HEK293 (cell line): ENCODE measurements at regions of chr1 and their contacts with region 1.

Region 1: DNA sequence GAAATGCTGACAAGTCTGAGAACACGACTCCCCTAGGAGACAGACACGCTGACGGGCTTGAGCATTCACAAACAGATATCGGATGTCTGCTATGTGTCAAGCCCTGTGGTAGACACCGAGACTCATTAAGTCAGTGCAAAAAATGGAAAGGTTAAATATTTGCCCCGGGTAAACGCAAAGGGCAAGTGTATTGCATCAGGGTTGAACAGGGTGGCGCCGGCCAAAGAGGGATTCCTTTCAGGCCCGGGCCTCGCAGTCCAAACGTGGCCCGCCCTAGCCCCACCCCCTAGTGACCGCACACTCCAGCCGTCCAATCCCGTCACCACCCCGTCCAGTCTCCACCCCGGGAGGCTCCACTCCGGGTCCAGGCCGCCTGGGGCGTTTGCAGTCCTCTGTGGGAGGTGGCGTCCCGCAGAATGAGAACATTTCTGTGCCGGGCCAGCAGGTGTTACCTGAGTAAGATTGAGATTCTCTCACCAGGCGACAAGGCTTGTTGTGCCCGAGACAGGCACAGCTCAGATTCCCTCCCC is 16.3 kb upstream of the TMEM9 start:
- H3K4me3 ChIP-seq: peak overlapping the region; percentile 54
- H3K27ac ChIP-seq: peak overlapping the region; percentile 82
- H3K4me1 ChIP-seq: no peaks in the 10 kb centered on the region
- CTCF ChIP-seq: no peak

Region 2: DNA sequence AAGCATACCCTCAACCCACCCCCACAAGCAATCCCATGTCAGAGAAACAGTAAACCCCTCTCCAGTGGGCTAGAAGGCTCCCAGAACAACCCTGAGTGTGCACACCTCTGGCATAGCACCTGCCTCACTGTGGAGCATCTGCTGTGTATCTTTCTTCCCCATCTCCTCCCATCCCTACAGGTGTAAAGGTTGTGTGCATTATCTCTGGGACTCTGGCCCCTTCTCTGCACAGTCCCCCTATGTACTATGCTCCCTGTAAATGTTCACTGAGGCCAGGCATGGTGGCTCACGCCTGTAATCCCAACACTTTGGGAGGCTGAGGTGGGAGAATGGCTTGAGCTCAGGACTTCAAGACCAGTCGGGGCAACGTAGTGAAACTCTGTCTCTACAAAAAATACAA is 57.7 kb before region 1 on chr1:
- CTCF ChIA-PET with region 1: no interaction called
- POLR2A ChIA-PET with region 1: no interaction called
- H3K4me3 ChIP-seq: no peak overlapping the region
- H3K27ac ChIP-seq: no peak overlapping the region
- H3K4me1 ChIP-seq: no peaks in the 10 kb centered on the region
- CTCF ChIP-seq: no peak

Region 3: DNA sequence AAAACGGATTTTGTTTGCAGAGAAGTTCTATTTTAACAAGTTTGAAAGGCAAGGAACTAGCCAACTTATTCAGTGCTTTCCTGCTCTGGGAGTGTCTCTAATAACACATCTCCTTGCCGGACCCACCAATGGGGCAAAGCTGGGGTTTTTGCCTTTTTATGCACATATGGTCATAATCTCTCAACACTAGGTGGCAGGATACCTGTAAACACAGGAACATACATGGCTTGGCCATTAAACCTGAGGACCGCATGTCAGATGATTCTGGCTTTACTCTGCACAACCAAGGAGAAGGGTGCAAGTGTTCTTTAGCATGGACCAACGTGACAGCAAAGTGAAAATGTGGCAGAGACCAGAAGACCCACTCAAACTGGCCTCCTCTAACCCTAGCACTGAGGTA is 21.2 kb before region 1 on chr1:
- CTCF ChIA-PET with region 1: interaction called, 6 read pairs
- POLR2A ChIA-PET with region 1: interaction called, 21 read pairs
- H3K4me3 ChIP-seq: no peak overlapping the region
- H3K27ac ChIP-seq: no peak overlapping the region
- H3K4me1 ChIP-seq: no peaks in the 10 kb centered on the region; the same call in 1 of the 2 replicates
- CTCF ChIP-seq: 0 out of 2 replicates have a peak, but pooled peaks have one; percentile 23

Region 4: DNA sequence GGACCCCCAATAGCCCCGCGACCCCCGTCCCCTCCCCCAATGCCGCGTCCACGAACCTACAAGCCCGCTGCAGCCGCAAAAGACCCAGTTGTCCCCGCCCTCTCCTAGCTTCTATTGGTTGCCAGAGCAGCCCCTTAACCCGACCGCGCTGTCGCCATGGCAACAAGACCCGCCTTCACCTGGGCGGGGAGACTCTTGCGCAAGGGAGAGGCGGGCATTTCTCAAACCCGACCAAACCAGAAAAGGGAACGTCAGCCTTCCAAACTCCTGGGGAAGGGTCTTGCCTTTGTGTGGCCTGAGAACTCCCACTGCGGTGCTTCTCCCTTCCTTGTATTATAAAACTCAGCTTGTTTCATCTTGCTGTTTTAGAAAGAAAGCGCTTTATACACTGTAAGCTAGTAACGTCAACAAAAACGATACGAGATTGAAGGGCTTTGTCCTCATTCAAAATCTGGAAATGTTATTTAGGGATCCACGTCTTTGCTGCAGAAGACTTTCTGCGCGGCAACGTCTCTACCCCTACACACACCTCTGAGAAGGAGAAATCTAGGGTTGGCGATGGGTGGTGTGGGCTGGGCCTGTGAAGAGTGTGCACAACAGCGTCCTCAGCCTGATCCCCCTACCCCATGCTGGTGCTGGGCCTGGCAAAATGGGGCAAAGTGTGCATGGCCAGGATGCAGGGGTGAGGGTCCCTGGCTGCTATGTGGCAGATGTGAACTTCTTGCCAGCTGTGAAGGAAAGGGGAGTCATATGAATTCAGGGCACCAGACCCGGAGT is 16.0 kb before region 1 on chr1 and contains the start of gene TMEM9:
- CTCF ChIA-PET with region 1: interaction called, 6 read pairs
- POLR2A ChIA-PET with region 1: interaction called, 21 read pairs
- H3K4me3 ChIP-seq: peak within 1 kb of the TSS; percentile 78
- H3K27ac ChIP-seq: peak within 1 kb of the TSS; percentile 55; the same call in 1 of the 2 replicates
- H3K4me1 ChIP-seq: no peaks in the 10 kb centered on the region; the same call in 1 of the 2 replicates
- CTCF ChIP-seq: no peak

Region 5: GRCh38 chr1:201229771-201230635 is 59.4 kb after region 1 on chr1:
- CTCF ChIA-PET with region 1: no interaction called
- POLR2A ChIA-PET with region 1: no interaction called
- H3K4me3 ChIP-seq: no peak overlapping the region
- H3K27ac ChIP-seq: no peak overlapping the region
- H3K4me1 ChIP-seq: no peaks in the 10 kb centered on the region
- CTCF ChIP-seq: no peak

Region 6: DNA sequence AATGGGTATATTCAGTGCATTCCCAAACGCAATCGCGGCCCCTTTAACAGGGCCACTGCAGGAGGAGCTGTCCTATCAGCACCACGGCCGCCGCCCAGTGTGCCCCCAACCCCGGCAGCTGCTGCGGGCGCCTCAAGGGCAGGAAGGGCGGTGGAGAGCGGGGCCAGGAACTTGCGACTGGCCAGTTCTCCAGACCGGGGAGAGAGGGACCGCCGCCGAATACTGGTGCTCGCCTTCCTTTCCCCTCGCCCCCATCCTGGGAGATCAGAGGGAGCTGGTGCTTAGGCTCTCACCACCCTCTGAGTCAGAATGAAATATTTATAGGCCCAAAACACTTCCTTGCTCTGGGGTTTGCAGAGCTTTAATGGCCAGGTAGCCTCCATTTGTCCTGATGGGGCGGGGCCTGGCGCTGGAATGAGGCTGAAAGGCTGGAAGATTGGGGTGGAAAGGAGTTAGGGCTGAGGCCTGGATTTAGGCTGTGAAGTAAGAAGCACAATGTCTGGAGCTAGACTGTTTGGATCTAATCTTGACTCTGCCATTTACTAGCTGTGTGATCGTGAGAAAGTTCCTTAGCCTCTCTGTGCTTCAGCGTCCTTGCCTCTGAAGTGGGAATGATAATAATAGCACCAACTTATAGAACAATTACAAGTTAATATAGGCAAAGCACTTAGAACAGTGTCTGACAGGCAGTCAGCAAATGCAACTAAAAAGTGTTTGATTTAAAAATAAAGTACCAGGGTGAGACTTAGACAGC is 443.8 kb after region 1 on chr1:
- CTCF ChIA-PET with region 1: no interaction called
- POLR2A ChIA-PET with region 1: no interaction called
- H3K4me3 ChIP-seq: no peak overlapping the region
- H3K27ac ChIP-seq: no peak overlapping the region
- H3K4me1 ChIP-seq: no peaks in the 10 kb centered on the region
- CTCF ChIP-seq: no peak